ENCODE measurements at regions of chr7 and their contacts with region 1.

Region 1: DNA sequence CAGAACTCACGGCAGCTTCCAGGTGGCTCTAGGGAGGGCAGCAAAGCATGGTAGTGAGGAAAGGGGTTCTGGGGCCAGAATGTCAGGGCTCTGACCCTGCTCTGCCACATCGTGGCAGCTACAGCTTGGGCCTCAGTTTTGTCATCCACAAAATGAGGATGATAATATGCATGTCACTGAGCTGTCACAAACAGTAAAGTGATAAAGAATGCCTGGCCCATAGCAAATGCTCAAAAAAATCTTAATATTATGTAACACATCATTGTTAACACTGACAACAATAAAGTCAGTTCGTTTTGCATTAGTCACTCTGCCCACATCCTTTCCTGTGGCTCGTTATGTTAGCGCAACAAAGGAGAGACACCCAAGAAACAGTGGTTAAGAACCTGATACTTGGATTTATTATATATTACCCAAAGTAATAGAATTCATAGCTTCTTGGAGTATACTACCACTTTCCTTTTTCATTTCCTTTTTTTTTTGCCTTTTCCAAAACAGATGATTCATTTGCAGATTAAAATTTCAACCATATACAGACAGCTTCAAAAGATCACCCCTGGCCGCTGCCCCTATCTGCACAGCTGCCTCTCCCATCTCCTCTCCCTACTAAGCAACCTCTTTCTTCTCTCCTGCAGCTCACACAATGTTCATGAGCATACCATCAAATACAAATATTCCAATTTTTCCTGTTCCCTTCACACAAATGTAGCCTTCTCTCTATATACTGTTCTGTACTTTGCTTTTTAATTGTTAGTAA is 45.5 kb upstream of the DDC start:
- DNase-seq: peak; percentile 74
- H3K4me3 Mint-ChIP-seq: no peak overlapping the region
- H3K27ac Mint-ChIP-seq: peak overlapping the region; percentile 74
- H3K4me1 Mint-ChIP-seq: peaks cover 48% of the 10 kb centered on the region
- H3K27me3 Mint-ChIP-seq: peaks cover 11% of the 10 kb centered on the region

Region 2: GRCh38 chr7:50595491-50596102 is 15.1 kb before region 1 on chr7:
- CTCF ChIA-PET with region 1: interaction called, 12 read pairs
- DNase-seq: peak; percentile 30
- H3K4me3 Mint-ChIP-seq: no peak overlapping the region
- H3K27ac Mint-ChIP-seq: no peak overlapping the region
- H3K4me1 Mint-ChIP-seq: peaks cover 31% of the 10 kb centered on the region
- H3K27me3 Mint-ChIP-seq: peaks cover 9% of the 10 kb centered on the region

Region 3: GRCh38 chr7:50621973-50622490 is 11.3 kb after region 1 on chr7:
- CTCF ChIA-PET with region 1: interaction called, 13 read pairs
- DNase-seq: no peak
- H3K4me3 Mint-ChIP-seq: no peak overlapping the region
- H3K27ac Mint-ChIP-seq: no peak overlapping the region
- H3K4me1 Mint-ChIP-seq: no peaks in the 10 kb centered on the region
- H3K27me3 Mint-ChIP-seq: peaks cover 20% of the 10 kb centered on the region

Region 4: GRCh38 chr7:50632561-50633413 is 22.1 kb after region 1 on chr7:
- CTCF ChIA-PET with region 1: interaction called, 23 read pairs
- DNase-seq: peak; percentile 64
- H3K4me3 Mint-ChIP-seq: no peak overlapping the region
- H3K27ac Mint-ChIP-seq: no peak overlapping the region
- H3K4me1 Mint-ChIP-seq: no peaks in the 10 kb centered on the region
- H3K27me3 Mint-ChIP-seq: peaks cover 23% of the 10 kb centered on the region

Region 5: DNA sequence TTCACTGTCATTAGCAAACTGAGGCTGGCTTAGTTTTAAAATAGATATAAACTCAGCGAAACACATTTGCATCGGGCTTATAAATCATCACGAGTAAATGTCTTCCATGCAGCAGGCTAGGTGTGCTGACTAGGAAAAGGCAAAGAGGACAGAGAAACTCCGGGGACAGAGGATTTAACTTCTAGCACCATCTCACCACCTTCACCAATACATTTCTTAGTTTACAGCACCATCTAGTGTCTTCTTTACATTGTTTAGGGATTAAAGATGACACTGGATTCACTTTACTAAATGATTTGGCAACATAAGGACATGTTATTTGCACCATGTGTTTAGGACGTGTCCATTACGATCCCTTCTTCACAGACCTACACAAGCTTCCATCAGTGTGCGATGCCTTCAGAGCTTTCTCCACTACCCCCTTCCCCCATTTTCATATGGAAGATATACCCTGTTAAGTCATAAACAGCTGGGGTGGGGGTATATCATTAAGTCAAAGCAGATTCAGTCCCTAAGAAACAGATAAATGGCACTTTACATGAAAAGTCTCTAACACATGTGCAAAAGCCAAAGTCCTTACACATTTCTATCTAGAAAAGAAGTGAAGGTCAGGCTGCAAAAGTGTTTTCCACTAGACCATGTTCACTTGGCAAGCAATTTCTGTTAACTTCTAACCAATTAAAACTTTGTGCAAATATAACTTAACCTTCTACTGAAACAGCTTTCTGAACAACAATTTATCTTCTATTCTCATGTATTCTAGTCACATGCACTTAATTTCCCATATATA is 68.7 kb after region 1 on chr7:
- CTCF ChIA-PET with region 1: interaction called, 42 read pairs
- DNase-seq: no peak
- H3K4me3 Mint-ChIP-seq: no peak overlapping the region
- H3K27ac Mint-ChIP-seq: no peak overlapping the region
- H3K4me1 Mint-ChIP-seq: no peaks in the 10 kb centered on the region
- H3K27me3 Mint-ChIP-seq: peaks cover 6% of the 10 kb centered on the region